Left cardiac atrium (tissue), 4 donors: ENCODE measurements at regions of chr10 and their contacts with region 1.

Region 1: DNA sequence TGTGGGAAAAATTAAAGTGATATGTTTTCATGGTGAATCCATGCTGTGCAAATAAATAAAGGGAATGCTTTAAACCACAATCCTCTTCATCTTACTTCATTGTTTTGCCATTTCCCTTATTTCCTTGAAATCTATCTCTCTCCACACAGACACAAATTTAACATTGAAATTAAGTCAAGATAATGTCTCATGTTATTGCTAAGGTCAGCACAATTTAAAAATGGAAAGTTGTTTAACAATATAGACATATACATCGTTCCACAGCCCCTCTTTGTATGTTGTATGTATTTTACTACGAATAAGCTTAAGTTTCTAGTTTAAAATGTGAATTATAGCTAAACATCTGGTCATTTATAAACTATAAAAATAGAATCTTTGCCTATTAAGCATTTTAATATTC is 256.9 kb downstream of the PLXDC2 start:
- DNase-seq: no peak
- ATAC-seq: no peak

Region 2: DNA sequence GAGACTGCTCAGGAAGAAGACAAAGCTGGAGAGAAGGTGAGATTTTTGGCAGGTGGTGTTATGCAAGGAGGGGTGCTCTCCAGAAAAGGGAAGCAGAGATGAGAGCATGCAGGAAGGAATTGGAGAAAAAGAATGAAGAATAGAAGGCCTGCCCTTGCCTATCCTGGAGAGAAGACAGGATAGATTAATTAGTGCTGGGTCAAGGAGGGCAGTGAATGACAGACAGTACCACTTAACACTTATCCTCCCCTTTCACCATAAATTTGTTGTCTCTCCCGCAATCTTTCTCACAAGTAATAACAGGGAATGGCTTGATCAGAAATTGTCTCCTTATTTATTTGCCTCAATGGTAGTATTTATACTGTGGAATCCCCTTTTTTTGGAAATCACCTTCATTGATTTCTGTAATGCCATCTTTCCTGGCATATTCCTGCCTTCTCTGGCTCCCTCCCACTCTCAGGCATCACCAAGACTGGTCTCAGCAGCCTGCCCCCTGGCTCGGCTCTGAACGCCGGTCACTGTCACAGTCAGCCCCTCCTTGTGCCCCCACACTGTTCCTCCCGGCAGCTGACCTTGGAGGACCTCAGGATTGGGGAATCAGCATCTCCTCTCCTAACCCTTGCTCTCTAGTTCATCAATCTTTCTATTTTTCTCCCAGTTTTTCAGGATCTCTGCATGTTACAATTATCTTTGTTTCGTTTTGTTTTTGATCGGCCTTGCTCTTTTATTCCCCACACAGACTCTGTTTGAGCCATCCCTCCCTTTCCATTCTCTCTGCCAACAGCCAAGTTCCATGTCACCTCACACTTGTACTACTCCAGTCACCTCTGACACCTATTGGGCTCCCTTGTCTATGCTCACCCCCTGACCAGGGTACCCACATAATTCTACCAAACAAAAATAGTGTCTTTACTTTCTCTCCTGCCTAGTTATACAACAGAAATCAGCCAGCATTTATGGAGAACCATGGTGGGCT is 37.2 kb after region 1 on chr10:
- intact Hi-C with region 1: no loop called
- DNase-seq: no peak
- ATAC-seq: no peak

Region 3: DNA sequence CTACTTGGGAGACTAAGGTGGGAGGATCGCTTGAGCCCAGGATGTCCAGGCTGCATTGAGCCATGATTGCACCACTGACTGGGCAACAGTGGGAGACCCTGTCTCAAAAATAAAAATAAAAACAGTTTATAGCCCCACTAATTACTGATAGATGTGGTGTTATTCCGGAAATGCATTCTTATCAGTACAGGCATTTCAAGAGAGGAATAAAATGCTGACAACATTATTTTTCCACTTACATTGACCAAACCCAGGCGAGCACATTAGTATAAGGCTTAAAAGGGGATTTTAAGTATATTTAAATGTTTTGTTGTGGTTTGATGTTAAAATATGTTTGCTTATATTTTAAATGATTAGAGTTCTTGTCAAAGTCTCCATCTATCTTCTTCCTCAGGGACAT is 102.6 kb after region 1 on chr10:
- intact Hi-C with region 1: loop called in 1 of 2 experiments (anchors 5 kb)
- DNase-seq: no peak
- ATAC-seq: no peak